ENCODE measurements at regions of chr5 and their contacts with region 1.

Region 1: DNA sequence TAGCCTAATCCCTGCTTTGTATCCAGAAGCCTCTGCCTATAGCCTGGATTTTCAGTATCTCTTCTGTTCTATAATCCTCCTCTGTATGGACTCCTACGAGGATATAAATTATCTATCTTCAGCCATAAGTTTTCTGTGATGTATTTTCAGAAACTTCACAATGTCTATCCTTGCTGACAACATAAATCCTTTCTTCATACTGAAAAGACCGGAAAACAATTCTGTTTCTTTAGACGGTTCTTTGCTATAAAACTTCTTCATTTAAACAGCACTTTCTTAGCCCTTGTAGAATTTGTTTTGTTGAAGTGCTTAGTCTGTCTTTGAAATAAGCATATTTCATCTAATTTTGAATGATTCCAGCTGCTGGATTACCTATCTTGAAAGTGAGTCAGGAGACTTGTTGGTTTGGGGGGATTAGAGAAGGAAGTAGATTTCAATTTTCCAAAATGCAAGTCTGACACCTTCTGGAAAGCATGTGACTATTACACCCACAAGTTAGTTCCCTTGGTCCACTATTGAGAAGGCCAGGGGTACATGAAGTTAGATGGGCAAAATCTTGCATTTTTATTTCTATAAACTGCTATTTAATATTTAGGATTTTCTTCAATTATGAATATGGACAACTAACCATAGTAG is 96.3 kb upstream of the RANBP3L start:
- DNase-seq: peak; percentile 19
- H3K4me3 ChIP-seq: no peak overlapping the region
- H3K27ac ChIP-seq: no peak overlapping the region
- H3K4me1 ChIP-seq: no peaks in the 10 kb centered on the region
- H3K27me3 ChIP-seq: no peaks in the 10 kb centered on the region
- CTCF ChIP-seq: peak; percentile 37 to 56

Region 2: GRCh38 chr5:35890021-35890696 is 507.9 kb before region 1 on chr5:
- CTCF ChIA-PET with region 1: no interaction called
- dilution Hi-C with region 1: no loop called
- in situ Hi-C with region 1: no loop called
- intact Hi-C with region 1: no loop called
- DNase-seq: no peak
- H3K4me3 ChIP-seq: no peak overlapping the region
- H3K27ac ChIP-seq: no peak overlapping the region
- H3K4me1 ChIP-seq: peaks cover 1% of the 10 kb centered on the region
- H3K27me3 ChIP-seq: no peaks in the 10 kb centered on the region
- CTCF ChIP-seq: no peak

Region 3: GRCh38 chr5:36177715-36178523 is 220.1 kb before region 1 on chr5:
- CTCF ChIA-PET with region 1: no interaction called
- dilution Hi-C with region 1: no loop called
- in situ Hi-C with region 1: no loop called
- intact Hi-C with region 1: loop called (anchors 2 kb)
- DNase-seq: peak; percentile 18
- H3K4me3 ChIP-seq: no peak overlapping the region
- H3K27ac ChIP-seq: no peak overlapping the region
- H3K4me1 ChIP-seq: no peaks in the 10 kb centered on the region
- H3K27me3 ChIP-seq: no peaks in the 10 kb centered on the region
- CTCF ChIP-seq: peak; percentile 62 to 65

Region 4: GRCh38 chr5:36264202-36264760 is 133.7 kb before region 1 on chr5:
- CTCF ChIA-PET with region 1: no interaction called
- dilution Hi-C with region 1: no loop called
- in situ Hi-C with region 1: loop called (anchors 10 to 25 kb)
- intact Hi-C with region 1: loop called (anchors 1 kb)
- DNase-seq: no peak
- H3K4me3 ChIP-seq: no peak overlapping the region
- H3K27ac ChIP-seq: no peak overlapping the region
- H3K4me1 ChIP-seq: peaks cover 3% of the 10 kb centered on the region
- H3K27me3 ChIP-seq: no peaks in the 10 kb centered on the region
- CTCF ChIP-seq: no peak

Region 5: GRCh38 chr5:36305571-36306326 is 92.3 kb before region 1 on chr5:
- CTCF ChIA-PET with region 1: no interaction called
- dilution Hi-C with region 1: no loop called
- in situ Hi-C with region 1: no loop called
- intact Hi-C with region 1: loop called (anchors 5 kb)
- DNase-seq: peak; percentile 18
- H3K4me3 ChIP-seq: no peak overlapping the region
- H3K27ac ChIP-seq: no peak overlapping the region
- H3K4me1 ChIP-seq: peaks cover 4% of the 10 kb centered on the region
- H3K27me3 ChIP-seq: peaks cover 6% of the 10 kb centered on the region
- CTCF ChIP-seq: peak; percentile 50 to 75